ENCODE measurements at regions of chr17 and their contacts with region 1.

Region 1: DNA sequence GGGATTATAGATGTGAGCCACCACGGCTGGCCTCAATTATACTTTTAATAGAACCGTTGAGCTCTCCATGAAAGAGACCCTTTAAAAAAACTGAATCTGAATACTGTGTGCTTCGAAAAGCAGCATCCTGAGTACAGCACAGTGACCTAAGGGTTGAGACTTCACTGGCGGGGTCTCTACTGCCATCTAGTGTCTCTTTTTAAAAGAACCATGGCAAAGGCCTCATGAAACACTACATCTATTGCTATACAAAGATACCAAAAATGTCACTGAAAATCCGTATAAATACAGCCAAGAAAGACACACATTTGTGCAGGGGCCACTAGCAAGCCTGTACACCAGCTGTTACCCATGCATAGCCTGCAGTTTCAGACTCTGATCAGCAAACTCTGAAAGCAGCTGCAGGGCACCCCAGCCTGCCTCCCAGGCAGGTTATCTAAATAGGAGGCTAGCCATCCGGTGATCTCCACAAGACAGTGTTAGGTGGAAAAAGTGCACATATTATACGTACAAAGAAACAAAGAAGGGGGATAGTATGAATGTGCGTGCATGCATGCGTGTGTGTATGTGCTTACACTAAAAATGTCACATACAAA is 35.3 kb downstream of the NPLOC4 start:
- DNase-seq: peak in 2 of 4 donors; percentile 62 to 73
- ATAC-seq: peak; percentile 98
- H3K4me3 ChIP-seq: no peak overlapping the region
- H3K27ac ChIP-seq: no peak overlapping the region
- H3K4me1 ChIP-seq: peaks cover 0 to 13% of the 10 kb centered on the region in 2 donors
- H3K27me3 ChIP-seq: no peaks in the 10 kb centered on the region
- CTCF ChIP-seq: peak; percentile 72 to 77

Region 2: GRCh38 chr17:81253358-81254131 is 348.1 kb before region 1 on chr17:
- intact Hi-C with region 1: loop called in 1 of 2 experiments (anchors 10 kb)
- DNase-seq: peak in 2 of 4 donors; percentile 46 to 55
- ATAC-seq: peak; percentile 30
- H3K4me3 ChIP-seq: no peak overlapping the region
- H3K27ac ChIP-seq: no peak overlapping the region
- H3K4me1 ChIP-seq: peaks cover 12 to 19% of the 10 kb centered on the region in 2 donors
- H3K27me3 ChIP-seq: no peaks in the 10 kb centered on the region
- CTCF ChIP-seq: peak; percentile 77 to 80

Region 3: DNA sequence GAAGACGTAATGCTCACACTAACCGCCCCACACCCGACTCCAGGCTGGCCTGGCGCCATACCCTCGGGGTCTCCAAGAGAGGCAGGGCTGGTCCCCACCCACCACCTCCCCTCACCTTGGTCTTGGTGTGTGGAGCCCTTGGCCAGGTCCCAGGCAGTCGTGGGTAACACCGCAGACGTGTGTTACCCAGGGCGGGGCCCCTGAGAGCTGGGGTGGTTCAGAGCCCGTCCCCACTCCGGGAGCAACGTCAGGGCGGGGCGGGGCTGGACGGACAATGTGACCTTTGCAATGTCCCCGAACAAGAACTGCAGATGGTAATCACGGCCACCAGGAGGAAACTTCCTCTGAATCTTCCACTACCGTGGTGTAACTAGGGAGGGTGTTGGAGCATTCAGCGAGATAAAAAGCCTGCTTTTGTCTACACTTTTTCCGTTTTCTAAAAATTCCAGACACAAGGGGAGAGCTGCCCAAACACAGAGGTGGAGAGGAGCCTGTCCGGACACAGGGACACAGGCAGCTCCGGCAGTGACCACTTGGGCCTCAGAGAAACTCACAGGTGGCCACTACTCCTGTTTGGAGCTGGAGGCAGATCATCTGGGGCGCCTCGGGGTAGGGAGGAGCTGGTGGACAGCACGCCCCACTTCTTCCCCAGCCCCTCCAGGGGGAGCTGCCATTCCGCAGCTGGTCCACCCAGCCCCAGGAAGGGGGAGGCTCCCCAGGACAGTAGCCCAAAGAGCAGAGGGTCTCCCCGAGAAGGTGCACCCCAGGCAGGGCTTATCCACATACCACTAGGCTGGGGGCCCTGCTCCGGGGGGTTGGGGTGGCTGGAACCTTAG is 292.3 kb before region 1 on chr17:
- intact Hi-C with region 1: no loop called
- DNase-seq: peak; percentile 73 to 97 (median 88)
- ATAC-seq: peak; percentile 96
- H3K4me3 ChIP-seq: peak overlapping the region; percentile 33 to 41
- H3K27ac ChIP-seq: peak overlapping the region; percentile 80 to 87
- H3K4me1 ChIP-seq: peaks cover 17 to 33% of the 10 kb centered on the region in 2 donors
- H3K27me3 ChIP-seq: no peaks in the 10 kb centered on the region
- CTCF ChIP-seq: peak; percentile 33 to 79